Head of caudate nucleus (tissue), 42 donors: ENCODE measurements at regions of chr6 and their contacts with region 1.

Region 1: GRCh38 chr6:41545703-41546474 is at the start of gene FOXP4:
- DNase-seq: peak; percentile 76 to 98 (median 94)

Region 2: DNA sequence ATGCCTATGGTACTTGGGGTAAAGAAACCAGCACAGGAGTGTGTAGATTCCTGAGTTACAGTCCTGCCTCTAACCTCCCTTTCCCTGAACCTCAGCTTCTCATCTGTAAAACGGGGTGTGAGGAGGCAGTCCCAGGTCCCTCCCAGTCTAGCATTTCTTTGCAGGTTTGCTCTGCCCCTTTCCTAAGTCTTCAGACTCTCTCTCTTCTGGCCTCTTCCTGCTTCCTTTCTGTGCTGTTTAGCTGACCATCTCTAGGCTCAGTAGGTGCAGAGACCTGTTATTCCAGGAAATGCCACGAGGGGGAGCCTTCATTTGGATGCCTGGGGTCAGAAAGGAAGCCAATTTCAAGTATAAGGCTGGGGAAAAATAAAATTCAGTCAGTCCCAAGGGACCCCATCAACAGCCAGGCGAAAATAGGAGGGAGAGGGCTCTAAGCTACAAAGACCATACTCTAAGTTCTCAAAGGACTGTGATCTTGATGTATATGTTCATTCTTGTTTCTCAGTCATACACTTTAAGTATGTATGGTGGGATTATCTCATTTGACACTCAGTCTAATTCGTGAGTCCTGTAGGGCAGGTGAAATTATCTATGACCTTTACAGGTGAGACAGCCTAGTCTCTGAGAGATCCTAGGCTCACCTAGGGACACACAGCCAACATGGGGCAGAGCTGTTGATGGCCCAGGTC is 121.4 kb before region 1 on chr6:
- intact Hi-C with region 1: loop called (anchors 5 kb)
- DNase-seq: peak; percentile 38 to 97 (median 91)